Heart left ventricle (tissue), 16 donors: ENCODE measurements at regions of chr16 and their contacts with region 1.

Region 1: DNA sequence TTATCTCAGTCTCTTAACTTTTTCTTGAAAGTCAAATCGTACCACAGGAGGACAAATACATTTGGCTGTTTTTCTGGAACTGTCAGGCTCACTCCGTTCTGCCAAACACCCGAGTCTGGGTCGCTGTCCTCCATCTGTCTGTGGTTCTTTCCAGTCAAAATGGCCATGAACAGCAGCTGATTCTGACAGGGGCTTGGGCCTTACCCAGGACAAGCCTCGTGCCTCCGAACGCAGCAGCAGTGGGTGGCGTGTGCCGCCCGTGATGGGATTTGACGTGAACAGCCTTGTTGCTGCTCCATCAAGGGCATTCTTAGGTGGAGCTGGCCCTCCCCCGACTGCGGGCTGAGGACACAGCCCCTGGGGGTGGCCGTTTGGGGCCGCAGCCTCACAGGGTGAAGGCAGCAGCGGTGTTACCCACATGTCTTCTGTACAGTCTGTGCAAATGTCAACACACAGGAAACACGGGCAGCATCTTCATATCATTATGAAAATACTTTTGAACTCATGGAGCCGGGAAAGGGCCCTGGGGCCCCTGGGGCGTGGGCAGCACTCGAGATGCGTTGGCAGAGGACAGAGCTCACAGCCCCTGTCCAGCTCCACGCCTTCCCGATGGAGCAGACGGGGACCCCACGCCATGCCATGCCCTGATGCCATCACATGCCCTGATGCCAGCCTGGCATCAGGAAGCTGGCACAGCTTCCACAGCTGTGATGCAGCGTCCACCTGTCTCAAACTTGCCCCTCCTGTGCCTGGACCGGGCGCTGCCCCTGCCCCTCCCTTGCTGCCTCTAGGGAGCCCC is 8.6 kb upstream of the ACSF3 start:
- DNase-seq: peak in 1 of 5 donors; percentile 42
- ATAC-seq: no peak
- H3K4me3 ChIP-seq: no peak overlapping the region
- H3K27ac ChIP-seq: no peak overlapping the region
- H3K4me1 ChIP-seq: no peaks in the 10 kb centered on the region
- H3K27me3 ChIP-seq: peaks cover 4 to 34% (median 18%) of the 10 kb centered on the region in 9 donors
- CTCF ChIP-seq: no peak
- POLR2A ChIP-seq: no peak

Region 2: DNA sequence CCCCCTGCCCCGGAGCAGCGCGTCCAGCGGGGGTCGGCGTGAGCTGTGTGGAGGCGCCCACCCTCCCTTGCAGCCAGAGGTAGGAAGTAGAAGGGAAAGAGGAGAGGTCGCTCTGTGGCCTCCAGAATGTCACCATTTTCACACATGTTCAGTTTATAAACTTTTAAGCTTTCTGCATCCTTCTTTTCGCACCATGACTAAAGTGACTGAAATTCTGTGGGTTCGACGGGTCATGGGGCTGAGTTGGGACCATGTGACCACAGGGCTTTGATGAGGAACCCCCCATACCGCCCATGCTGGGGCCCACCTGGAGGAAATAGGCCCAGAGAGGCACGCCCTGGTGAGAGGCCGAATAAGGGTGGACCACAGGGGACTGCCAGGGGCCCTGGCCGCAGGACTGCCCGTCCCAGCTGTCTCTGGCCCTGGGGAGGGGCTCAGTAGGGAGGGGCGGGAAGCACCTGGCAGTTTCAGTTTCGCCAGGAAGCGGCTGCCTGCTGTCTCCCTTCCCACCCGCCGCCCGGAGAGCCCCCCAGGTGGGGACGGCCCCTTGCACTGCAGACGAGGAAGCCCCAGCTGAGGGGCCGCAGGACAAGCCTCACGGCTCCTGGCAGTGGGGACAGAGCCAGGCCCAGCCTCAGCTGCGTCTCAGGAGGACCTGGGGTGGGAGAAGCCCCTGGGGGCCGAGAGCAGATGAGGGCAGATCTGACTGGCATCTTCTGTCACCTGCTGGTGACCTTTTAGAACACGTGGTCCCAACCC is 117.0 kb before region 1 on chr16:
- intact Hi-C with region 1: loop called in 1 of 10 experiments (anchors 5 kb)
- DNase-seq: peak in 1 of 5 donors; percentile 61
- ATAC-seq: peak in 1 of 4 donors; percentile 46
- H3K4me3 ChIP-seq: peak overlapping the region in 1 of 12 donors; percentile 12
- H3K27ac ChIP-seq: no peak overlapping the region
- H3K4me1 ChIP-seq: peaks cover 0 to 35% (median 0%) of the 10 kb centered on the region in 12 donors
- H3K27me3 ChIP-seq: peaks cover 0 to 52% (median 17%) of the 10 kb centered on the region in 9 donors
- CTCF ChIP-seq: no peak
- POLR2A ChIP-seq: no peak